PC-3 (cell line): ENCODE measurements at regions of chr11 and their contacts with region 1.

Region 1: DNA sequence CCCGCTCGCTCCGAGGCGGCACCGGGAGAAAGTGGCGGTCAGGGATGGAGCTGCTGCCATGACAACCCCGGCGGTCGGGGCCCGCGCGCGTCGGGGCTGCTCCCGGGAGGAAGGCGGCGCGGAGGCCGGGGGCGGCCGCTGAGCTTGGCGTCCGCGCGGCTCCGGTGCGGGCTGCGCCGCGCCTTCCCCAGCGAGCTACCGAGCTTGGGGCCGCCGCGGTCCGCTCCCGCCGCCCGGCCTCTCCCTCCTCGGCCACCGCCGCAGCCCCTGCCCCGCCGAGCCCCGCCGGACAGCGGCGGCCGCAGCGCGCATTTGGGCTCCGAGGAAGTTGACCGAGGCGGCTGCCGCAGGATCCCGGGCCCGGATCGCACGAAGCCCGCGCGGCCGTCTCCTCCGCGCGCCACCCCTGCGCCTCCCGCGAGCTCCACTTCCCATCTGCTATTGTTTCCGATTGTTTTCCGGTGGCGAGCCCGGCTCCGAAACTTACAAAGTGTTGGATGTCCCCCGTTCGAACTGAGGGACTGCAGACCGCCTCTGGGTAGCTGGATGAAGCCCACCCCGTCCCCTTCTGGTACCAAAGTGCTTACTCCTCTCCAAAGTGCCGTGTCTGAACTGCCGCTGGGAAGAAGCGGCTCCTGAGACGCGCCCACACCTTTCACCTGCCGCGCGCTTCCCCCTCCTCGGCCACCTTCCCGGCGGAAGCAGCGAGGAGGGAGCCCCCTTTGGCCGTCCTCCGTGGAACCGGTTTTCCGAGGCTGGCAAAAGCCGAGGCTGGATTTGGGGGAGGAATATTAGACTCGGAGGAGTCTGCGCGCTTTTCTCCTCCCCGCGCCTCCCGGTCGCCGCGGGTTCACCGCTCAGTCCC is 540.3 kb downstream of the NTM start:
- DNase-seq: no peak
- ATAC-seq: no peak
- H3K4me3 ChIP-seq: no peak overlapping the region
- H3K27ac ChIP-seq: no peak overlapping the region
- H3K4me1 ChIP-seq: no peaks in the 10 kb centered on the region
- H3K27me3 ChIP-seq: no peaks in the 10 kb centered on the region
- CTCF ChIP-seq: no peak

Region 2: GRCh38 chr11:131897976-131898375 is 12.8 kb before region 1 on chr11:
- CTCF ChIA-PET with region 1: no interaction called
- POLR2A ChIA-PET with region 1: interaction called, 12 read pairs
- intact Hi-C with region 1: no loop called
- DNase-seq: no peak
- ATAC-seq: no peak
- H3K4me3 ChIP-seq: no peak overlapping the region
- H3K27ac ChIP-seq: peak overlapping the region; percentile 93
- H3K4me1 ChIP-seq: peaks cover 29% of the 10 kb centered on the region; the same call in 1 of the 2 replicates
- H3K27me3 ChIP-seq: no peaks in the 10 kb centered on the region
- CTCF ChIP-seq: no peak

Region 3: GRCh38 chr11:132032555-132032954 is 121.8 kb after region 1 on chr11:
- CTCF ChIA-PET with region 1: no interaction called
- POLR2A ChIA-PET with region 1: no interaction called
- intact Hi-C with region 1: no loop called
- DNase-seq: no peak
- ATAC-seq: no peak
- H3K4me3 ChIP-seq: no peak overlapping the region
- H3K27ac ChIP-seq: no peak overlapping the region
- H3K4me1 ChIP-seq: no peaks in the 10 kb centered on the region
- H3K27me3 ChIP-seq: no peaks in the 10 kb centered on the region
- CTCF ChIP-seq: no peak